Activated CD8-positive, alpha-beta T cell treated with anti-CD3 and anti-CD28 coated beads for 36 hours (primary cell): ENCODE measurements at regions of chr12 and their contacts with region 1.

Region 1: DNA sequence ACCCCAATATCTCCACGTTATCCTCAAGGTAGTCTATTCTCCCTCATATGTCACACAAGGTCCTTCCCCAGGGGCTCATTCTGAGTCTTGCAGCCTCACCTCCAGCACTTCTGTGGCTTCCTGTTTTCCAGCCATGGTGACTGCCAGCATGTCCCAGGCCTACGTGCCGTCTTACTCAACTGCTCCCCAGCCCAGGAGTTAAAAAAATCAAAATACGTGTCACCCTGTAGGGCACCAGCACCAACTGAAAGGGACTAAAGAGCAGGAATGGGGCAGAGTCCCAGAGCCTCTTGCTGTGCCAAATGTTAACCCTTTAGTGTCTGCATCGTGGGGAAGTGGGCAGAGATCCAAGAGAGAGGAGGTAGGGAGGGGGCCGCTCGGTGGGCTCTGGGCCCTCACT is 37.0 kb upstream of the MED13L start:
- DNase-seq: no peak
- ATAC-seq: no peak
- H3K4me3 Mint-ChIP-seq: no peak overlapping the region
- H3K27ac Mint-ChIP-seq: no peak overlapping the region
- H3K4me1 Mint-ChIP-seq: peaks cover 20% of the 10 kb centered on the region
- H3K27me3 Mint-ChIP-seq: peaks cover 3% of the 10 kb centered on the region
- CTCF ChIP-seq: no peak

Region 2: GRCh38 chr12:116303929-116304328 is 10.5 kb before region 1 on chr12:
- CTCF ChIA-PET with region 1: interaction called, 10 read pairs
- POLR2A ChIA-PET with region 1: interaction called, 3 read pairs
- intact Hi-C with region 1: no loop called
- DNase-seq: no peak
- ATAC-seq: no peak
- H3K4me3 Mint-ChIP-seq: no peak overlapping the region
- H3K27ac Mint-ChIP-seq: no peak overlapping the region
- H3K4me1 Mint-ChIP-seq: no peaks in the 10 kb centered on the region
- H3K27me3 Mint-ChIP-seq: no peaks in the 10 kb centered on the region
- CTCF ChIP-seq: no peak

Region 3: DNA sequence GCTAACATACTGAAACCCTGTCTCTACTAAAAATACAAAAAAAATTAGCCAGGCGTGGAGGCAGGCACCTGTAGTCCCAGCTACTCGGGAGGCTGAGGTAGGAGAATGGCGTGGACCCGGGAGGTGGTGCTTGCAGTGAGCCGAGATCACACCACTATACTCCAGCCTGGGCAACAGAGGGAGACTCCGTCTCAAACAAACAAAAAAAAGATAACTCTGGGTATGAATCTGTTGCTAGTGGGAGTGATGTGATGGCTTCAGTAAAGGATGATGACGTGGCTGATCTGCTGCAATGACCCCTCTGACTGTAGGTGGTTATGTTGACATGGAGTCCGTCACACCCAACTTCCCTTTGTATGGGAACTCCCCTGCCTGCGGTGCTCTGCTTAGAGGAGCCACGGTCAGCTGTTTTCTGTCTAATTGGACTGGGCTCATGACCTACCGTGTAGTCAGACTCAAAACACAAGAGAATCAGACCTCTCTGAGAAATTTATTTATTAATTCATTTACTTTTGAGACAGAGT is 22.1 kb after region 1 on chr12:
- CTCF ChIA-PET with region 1: no interaction called
- POLR2A ChIA-PET with region 1: no interaction called
- intact Hi-C with region 1: no loop called
- DNase-seq: peak; percentile 20
- ATAC-seq: peak; percentile 66
- H3K4me3 Mint-ChIP-seq: no peak overlapping the region
- H3K27ac Mint-ChIP-seq: no peak overlapping the region
- H3K4me1 Mint-ChIP-seq: peaks cover 2% of the 10 kb centered on the region
- H3K27me3 Mint-ChIP-seq: no peaks in the 10 kb centered on the region
- CTCF ChIP-seq: no peak